H1 (cell line): ENCODE measurements at regions of chr14 and their contacts with region 1.

Region 1: DNA sequence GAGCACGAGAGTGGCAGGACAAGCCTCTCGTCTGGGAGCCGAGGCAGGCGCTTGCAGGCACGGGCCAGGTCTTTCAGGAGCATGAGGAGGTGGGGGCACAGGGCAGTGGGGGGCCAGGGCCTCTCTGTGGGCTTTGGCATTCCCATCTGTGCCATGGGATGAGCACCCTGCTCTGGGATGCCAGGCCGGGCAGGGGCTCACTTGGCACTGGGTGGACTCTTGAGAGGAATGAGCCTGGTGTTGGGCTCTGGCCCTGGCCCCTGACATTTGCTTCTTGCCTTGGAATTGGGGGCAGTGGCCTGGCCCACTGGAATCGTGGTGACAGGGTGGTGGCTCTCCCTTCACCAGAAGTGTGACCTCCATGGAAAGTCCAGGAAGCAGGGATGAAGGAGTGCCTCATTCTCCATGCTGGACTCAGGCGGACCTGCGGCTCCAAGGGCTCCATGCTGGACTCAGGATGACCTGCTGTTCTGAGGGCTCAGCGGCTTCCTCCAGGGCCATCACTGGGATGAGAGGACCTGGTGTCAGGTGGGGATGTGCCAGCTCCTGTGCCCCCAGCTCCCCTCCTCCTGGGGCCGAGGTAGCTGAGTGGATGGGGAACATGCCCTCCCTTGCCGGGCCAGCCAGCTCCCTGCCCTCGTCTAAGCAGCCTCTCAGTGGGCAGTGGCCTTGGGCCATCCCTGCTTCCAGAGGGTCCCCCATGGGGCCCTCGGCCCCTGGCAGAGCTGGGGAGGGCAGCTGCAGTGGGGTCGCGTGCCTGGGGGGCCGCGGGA is 220.3 kb downstream of the KIF26A start:
- DNase-seq: no peak
- H3K4me3 ChIP-seq: no peak overlapping the region
- H3K27ac ChIP-seq: no peak overlapping the region
- H3K4me1 ChIP-seq: no peaks in the 10 kb centered on the region
- H3K27me3 ChIP-seq: no peaks in the 10 kb centered on the region
- CTCF ChIP-seq: no peak
- EP300 ChIP-seq: no peak
- POLR2A ChIP-seq: no peak
- RAD21 ChIP-seq: no peak

Region 2: DNA sequence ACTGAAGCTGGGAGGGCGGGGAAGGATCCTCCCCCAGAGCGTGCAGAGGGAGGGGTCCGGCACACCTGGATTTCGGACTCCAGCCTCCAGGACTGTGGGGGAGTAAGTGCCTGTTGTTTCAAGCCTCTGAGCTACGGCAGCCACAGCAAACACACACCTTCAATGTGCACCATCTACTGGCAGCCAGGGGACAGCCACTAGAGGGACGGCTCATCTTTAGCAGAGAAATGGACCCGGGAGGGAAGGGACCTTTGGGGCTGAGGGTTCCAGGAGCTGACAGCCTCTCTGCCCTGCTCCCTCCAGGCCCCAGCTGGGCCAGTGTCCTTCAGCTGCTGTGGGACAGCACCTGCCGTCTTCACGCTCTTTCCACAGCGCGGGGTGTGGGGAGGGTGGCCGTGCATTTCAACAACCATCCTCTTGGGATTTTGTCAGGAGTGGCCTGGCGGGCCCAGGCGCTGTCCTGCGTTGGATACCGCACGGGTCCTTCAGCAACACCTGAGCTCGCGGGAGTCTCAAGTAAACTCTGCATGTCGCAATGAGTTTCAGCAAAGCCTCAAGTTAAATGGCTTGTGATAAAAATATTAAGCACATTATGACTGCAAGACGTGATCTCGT is 11.6 kb after region 1 on chr14:
- CTCF ChIA-PET with region 1: interaction called, 13 read pairs
- POLR2A ChIA-PET with region 1: no interaction called
- DNase-seq: peak; percentile 13 to 63
- H3K4me3 ChIP-seq: no peak overlapping the region
- H3K27ac ChIP-seq: no peak overlapping the region
- H3K4me1 ChIP-seq: peaks cover 0 to 7% (median 2%) of the 10 kb centered on the region in 4 experiments; a peak in 3 of 7 replicates
- H3K27me3 ChIP-seq: no peaks in the 10 kb centered on the region; a peak in 1 of 7 replicates
- CTCF ChIP-seq: peak in 2 of 3 experiments; percentile 73 to 76; a peak in 3 of 4 replicates
- EP300 ChIP-seq: no peak
- POLR2A ChIP-seq: no peak
- RAD21 ChIP-seq: peak; percentile 65 to 73

Region 3: GRCh38 chr14:104450811-104451401 is 92.2 kb after region 1 on chr14:
- CTCF ChIA-PET with region 1: no interaction called
- POLR2A ChIA-PET with region 1: no interaction called
- DNase-seq: peak in 1 of 2 experiments; percentile 22
- H3K4me3 ChIP-seq: no peak overlapping the region
- H3K27ac ChIP-seq: no peak overlapping the region
- H3K4me1 ChIP-seq: no peaks in the 10 kb centered on the region
- H3K27me3 ChIP-seq: no peaks in the 10 kb centered on the region; a peak in 1 of 7 replicates
- CTCF ChIP-seq: no peak
- EP300 ChIP-seq: no peak
- POLR2A ChIP-seq: no peak
- RAD21 ChIP-seq: no peak